ACHN (cell line): ENCODE measurements at regions of chr10 and their contacts with region 1.

Region 1: GRCh38 chr10:123994417-123995081 is 98.8 kb downstream of the CHST15 start:
- DNase-seq: peak; percentile 93

Region 2: DNA sequence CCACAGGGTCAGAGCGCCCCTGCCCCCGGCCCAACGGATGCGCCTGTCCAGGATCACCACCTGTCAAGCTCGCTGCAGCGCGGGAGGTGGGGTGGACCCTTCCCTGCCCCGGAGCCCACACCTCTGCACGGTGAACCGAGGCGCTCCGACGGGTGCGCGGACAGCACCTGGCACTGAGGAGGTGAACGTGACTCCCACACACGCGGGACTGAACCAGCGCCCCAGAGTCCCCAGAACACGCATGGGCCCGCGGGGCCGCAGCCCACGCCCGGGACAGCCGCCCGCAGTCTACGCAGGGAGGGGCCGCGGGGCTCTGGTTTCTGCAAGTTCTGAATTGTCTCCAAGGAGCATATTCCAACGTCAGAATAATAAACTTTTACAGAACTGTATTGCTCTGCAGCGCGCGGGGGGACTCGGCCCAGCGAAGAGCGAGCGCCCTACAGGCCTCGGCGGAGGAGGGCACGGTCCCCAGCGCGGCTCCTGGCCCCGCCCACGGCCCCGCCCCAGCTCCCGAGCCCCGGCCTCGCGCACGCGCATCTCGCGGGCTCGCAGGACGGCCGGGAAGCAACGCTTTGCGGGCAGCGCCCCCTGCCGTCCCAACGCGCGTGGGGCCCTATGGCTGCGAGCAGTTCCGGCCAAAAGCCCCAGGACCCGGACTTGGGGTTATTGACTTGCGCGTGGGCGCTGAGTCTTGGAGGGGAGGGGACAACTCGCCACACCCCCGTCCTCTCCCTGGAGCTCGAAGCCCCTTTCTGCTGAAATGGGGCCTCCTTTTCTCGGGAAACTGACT is 394.5 kb after region 1 on chr10:
- in situ Hi-C with region 1: loop called (anchors 25 kb)
- DNase-seq: peak; percentile 88